ENCODE measurements at regions of chr14 and their contacts with region 1.

Region 1: GRCh38 chr14:52131640-52132320 is 62.9 kb upstream of the NID2 start:
- ATAC-seq: peak; percentile 88 to 100 (median 98)
- H3K4me3 ChIP-seq: no peak overlapping the region
- H3K27ac ChIP-seq: no peak overlapping the region
- H3K4me1 ChIP-seq: peaks cover 0 to 3% of the 10 kb centered on the region in 2 donors

Region 2: GRCh38 chr14:52015411-52016030 is 116.3 kb before region 1 on chr14:
- in situ Hi-C with region 1: loop called in 1 of 9 experiments (anchors 25 kb)
- ATAC-seq: peak in 7 of 8 experiments; percentile 30 to 71 (median 47)
- H3K4me3 ChIP-seq: no peak overlapping the region
- H3K27ac ChIP-seq: no peak overlapping the region
- H3K4me1 ChIP-seq: peaks cover 0 to 4% of the 10 kb centered on the region in 2 donors

Region 3: GRCh38 chr14:52272375-52272774 is 140.6 kb after region 1 on chr14:
- in situ Hi-C with region 1: loop called in 1 of 9 experiments (anchors 25 kb)
- ATAC-seq: peak in 3 of 8 experiments; percentile 39 to 68 (median 49)
- H3K4me3 ChIP-seq: no peak overlapping the region
- H3K27ac ChIP-seq: no peak overlapping the region
- H3K4me1 ChIP-seq: peaks cover 0 to 5% of the 10 kb centered on the region in 2 donors

Measured in motor neuron (in vitro differentiated cells).